ENCODE measurements at regions of chr2 and their contacts with region 1.

Region 1: DNA sequence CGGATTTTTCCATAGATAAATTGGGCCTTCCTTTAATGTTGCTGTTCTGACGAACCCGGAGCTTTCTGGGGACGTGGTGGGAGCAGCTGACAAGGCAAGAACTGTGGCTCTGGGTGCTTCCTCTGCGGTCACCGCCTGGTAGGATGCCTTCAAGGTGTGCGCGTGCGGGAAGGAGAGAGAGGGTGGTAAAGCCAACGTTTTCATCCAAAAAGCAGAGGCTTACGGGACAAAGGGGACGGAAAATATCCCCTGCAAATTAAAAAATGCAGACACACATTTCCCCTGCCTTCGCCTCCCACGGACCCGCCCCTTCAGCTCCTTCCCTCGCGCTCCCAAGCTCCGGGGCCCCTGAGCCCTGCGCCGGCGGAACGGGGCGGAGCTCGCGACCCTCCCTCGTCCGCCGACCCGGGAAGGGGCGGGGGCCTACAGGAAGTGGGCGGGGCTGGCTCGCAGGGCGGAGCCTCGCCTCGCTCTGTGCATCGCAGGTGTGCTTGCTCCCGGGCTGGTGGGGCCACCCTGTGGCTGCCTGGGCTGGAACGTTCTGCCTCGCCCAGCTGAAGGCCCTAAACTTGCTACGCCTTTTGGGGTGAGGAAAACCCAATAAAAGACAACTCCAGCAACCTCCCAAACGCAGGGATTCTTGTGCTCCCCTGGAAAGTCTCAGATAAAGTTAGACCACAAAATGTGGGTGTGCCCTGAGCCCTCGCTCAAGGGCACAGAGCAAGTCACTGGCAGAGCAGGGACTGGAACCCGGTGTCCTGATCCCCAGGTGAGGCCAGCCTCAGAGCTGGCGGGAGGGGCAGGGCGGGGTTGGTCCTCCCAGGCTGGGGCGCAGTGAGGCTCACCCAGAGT is 25.4 kb upstream of the SLC66A3 start:
- DNase-seq: peak; percentile 77
- H3K4me3 ChIP-seq: peak overlapping the region; percentile 37 to 58
- H3K27ac ChIP-seq: peak overlapping the region in 1 of 2 donors; percentile 15
- H3K4me1 ChIP-seq: peaks cover 14% of the 10 kb centered on the region
- H3K27me3 ChIP-seq: no peaks in the 10 kb centered on the region
- CTCF ChIP-seq: peak in 1 of 3 experiments; percentile 13
- POLR2A ChIP-seq: no peak

Region 2: DNA sequence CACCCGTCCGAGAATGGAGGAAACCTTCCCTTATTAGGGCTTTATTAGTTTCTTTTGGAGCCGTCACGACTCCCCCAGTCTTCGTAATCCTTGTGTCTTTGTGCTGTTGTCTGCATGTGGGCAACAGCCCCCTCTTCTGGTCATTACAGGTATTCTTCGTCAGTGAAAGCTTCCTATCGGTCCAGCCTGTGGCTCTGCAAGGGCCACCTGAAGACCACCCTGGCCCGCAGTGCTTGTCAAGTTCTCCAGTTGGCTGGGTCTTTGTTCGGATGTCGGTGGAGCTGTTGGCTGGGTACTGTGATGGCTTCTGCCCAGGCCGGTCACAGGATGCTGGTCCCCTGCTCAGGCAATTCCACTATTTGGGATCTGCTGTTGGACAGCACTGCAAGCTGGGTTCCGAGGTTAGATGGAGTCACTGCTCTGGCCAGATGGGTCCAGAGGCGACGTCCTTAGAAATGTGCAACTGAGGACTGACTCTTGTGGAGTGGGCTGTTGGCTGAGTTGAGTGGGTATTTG is 317.0 kb after region 1 on chr2:
- intact Hi-C with region 1: loop called (anchors 10 kb)
- DNase-seq: peak; percentile 78
- H3K4me3 ChIP-seq: no peak overlapping the region
- H3K27ac ChIP-seq: no peak overlapping the region
- H3K4me1 ChIP-seq: no peaks in the 10 kb centered on the region
- H3K27me3 ChIP-seq: no peaks in the 10 kb centered on the region
- CTCF ChIP-seq: peak; percentile 63 to 81 (median 78)
- POLR2A ChIP-seq: no peak